ENCODE measurements at regions of chr6 and their contacts with region 1.

Region 1: GRCh38 chr6:44043479-44044153 is 83.6 kb downstream of the MRPL14 start:
- DNase-seq: peak; percentile 65
- H3K4me3 Mint-ChIP-seq: no peak overlapping the region
- H3K27ac Mint-ChIP-seq: peak overlapping the region; percentile 60
- H3K4me1 Mint-ChIP-seq: peaks cover 23% of the 10 kb centered on the region
- H3K27me3 Mint-ChIP-seq: no peaks in the 10 kb centered on the region
- CTCF ChIP-seq: no peak

Region 2: GRCh38 chr6:43013843-43014433 is 1029.7 kb before region 1 on chr6 and contains the starts of genes KLHDC3 and MEA1:
- CTCF ChIA-PET with region 1: no interaction called
- intact Hi-C with region 1: no loop called
- DNase-seq: peak; percentile 100
- H3K4me3 Mint-ChIP-seq: peak within 1 kb of the TSS; percentile 97
- H3K27ac Mint-ChIP-seq: peak within 1 kb of the TSS; percentile 85
- H3K4me1 Mint-ChIP-seq: peaks cover 28% of the 10 kb centered on the region
- H3K27me3 Mint-ChIP-seq: no peaks in the 10 kb centered on the region
- CTCF ChIP-seq: no peak
- total RNA-seq, gene KLHDC3: 85.9 and 95.7 TPM in 2 replicates
- total RNA-seq, gene MEA1: 110 and 115 TPM in 2 replicates

Region 3: DNA sequence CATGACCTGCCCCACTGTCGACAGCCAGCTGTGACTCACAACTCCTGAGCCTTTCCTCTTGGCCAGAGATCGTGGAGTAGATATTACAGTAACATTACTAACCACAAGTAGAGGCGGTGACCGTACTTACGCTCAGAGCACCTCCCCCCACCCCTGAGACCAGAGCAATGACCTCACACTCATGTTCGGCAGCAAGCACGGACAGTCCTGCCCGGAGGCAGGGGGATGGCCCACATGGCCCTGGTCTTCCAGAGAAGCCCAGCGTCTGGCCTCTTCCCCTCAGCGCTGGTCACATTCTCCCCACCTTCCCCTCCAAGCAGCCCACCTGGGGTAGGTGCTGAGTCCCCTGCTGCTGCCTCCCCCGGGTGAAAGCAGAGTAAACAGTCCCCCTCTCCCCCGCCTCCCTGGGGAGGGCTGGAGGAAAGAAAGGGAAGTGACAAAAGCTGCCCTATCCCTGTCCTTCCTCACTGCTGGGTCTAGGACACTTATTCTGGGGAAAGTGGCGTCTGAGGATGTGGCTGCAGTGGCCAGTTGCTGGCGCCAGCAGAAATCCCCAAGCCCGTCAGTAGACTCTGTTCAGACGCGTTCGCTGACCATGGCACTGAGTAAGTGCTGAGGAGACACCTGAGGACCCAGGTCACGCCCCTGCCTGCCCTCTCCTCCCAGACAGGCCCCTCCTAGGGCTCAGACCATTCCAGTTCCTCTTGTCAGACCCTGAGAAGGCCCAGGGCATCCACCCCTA is 15.2 kb after region 1 on chr6:
- CTCF ChIA-PET with region 1: interaction called, 16 read pairs
- intact Hi-C with region 1: no loop called
- DNase-seq: peak; percentile 94
- H3K4me3 Mint-ChIP-seq: peak overlapping the region; percentile 54
- H3K27ac Mint-ChIP-seq: peak overlapping the region; percentile 98
- H3K4me1 Mint-ChIP-seq: peaks cover 60% of the 10 kb centered on the region
- H3K27me3 Mint-ChIP-seq: no peaks in the 10 kb centered on the region
- CTCF ChIP-seq: no peak